ENCODE measurements at regions of chr1 and their contacts with region 1.

Region 1: GRCh38 chr1:179168536-179168935 is 60.9 kb downstream of the ABL2 start:
- DNase-seq: no peak
- ATAC-seq: no peak
- H3K4me3 ChIP-seq: no peak overlapping the region
- H3K27ac ChIP-seq: no peak overlapping the region
- H3K4me1 ChIP-seq: peaks cover 38% of the 10 kb centered on the region
- H3K27me3 ChIP-seq: no peaks in the 10 kb centered on the region
- CTCF ChIP-seq: no peak

Region 2: DNA sequence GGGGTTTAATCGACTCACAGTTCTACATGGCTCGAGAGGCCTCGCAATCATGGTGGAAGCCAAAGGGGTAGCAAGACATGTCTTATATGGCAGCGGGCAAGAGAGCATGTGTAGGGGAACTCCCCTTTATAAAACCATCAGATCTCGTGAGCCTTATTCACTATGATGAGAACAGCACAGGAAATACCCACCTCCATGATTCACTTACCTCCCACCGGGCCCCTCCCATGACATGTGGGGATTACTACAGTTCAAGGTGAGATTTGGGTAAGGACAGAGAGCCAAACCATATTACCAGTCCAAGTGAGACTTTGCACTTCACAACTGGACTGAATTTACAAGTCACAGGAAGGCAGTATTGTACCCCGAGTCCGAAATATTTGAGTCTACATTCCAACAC is 223.8 kb before region 1 on chr1:
- CTCF ChIA-PET with region 1: no interaction called
- POLR2A ChIA-PET with region 1: interaction called, 35 read pairs
- intact Hi-C with region 1: no loop called
- DNase-seq: no peak
- ATAC-seq: no peak
- H3K4me3 ChIP-seq: no peak overlapping the region
- H3K27ac ChIP-seq: no peak overlapping the region
- H3K4me1 ChIP-seq: no peaks in the 10 kb centered on the region
- H3K27me3 ChIP-seq: no peaks in the 10 kb centered on the region
- CTCF ChIP-seq: no peak